ENCODE measurements at regions of chr2 and their contacts with region 1.

Region 1: GRCh38 chr2:160406591-160407392 is 86.8 kb downstream of the RBMS1 start:
- DNase-seq: peak; percentile 50 to 65
- ATAC-seq: peak; percentile 12 to 67 (median 52)
- H3K4me3 ChIP-seq: peak overlapping the region; percentile 79 to 97 (median 90)
- H3K27ac ChIP-seq: peak overlapping the region; percentile 88 to 100 (median 96)
- H3K4me1 ChIP-seq: peaks cover 4 to 82% (median 77%) of the 10 kb centered on the region in 9 donors
- H3K27me3 ChIP-seq: no peaks in the 10 kb centered on the region
- CTCF ChIP-seq: peak in 1 of 9 donors; percentile 5

Region 2: GRCh38 chr2:160324161-160324800 is 82.5 kb before region 1 on chr2:
- intact Hi-C with region 1: loop called in 3 of 10 experiments (anchors 5 kb)
- DNase-seq: peak; percentile 51 to 67
- ATAC-seq: peak in 7 of 8 donors; percentile 31 to 62 (median 40)
- H3K4me3 ChIP-seq: no peak overlapping the region
- H3K27ac ChIP-seq: peak overlapping the region in 3 of 10 donors; percentile 9 to 82 (median 36)
- H3K4me1 ChIP-seq: peaks cover 0 to 97% (median 77%) of the 10 kb centered on the region in 9 donors
- H3K27me3 ChIP-seq: no peaks in the 10 kb centered on the region
- CTCF ChIP-seq: peak; percentile 47 to 85 (median 73)

Region 3: GRCh38 chr2:160353166-160353565 is 53.6 kb before region 1 on chr2:
- intact Hi-C with region 1: loop called in 1 of 10 experiments (anchors 10 kb)
- DNase-seq: no peak
- ATAC-seq: no peak
- H3K4me3 ChIP-seq: no peak overlapping the region
- H3K27ac ChIP-seq: peak overlapping the region in 3 of 10 donors; percentile 8 to 45 (median 40)
- H3K4me1 ChIP-seq: peaks cover 2 to 86% (median 79%) of the 10 kb centered on the region in 9 donors
- H3K27me3 ChIP-seq: no peaks in the 10 kb centered on the region
- CTCF ChIP-seq: peak in 4 of 9 donors; percentile 22 to 45 (median 33)

Region 4: DNA sequence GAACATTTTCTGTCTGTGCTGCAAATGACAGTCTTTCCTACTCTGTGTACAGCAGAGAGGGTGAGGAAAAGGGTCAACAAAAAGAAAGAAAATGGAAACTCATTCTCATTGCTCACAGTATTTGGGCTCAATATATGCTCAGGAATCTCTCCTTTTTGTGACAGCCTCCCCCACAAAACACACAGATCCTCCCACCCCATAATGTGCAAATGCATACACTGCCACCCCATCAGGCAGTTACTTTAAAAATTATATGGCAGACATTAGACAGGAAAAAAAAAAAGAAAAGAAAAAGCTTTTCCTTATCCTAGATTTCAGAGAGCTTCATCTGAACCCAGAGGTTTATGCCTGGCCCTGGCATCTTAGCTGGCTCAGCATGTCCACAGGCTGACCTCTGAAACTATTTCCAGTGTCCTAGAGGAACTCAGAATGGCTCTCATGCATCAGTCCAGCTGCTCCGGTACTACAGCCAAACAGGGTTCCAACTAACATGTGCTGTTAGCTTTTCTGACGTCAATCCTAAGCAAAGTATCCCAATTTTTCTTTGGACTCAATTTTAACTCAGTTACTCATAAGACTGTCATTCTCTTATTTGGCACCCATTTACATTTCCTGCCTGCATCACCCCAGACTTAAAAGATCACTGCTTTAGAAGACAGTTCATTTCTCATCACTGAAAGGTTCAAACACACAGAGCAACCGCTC is 19.1 kb before region 1 on chr2:
- intact Hi-C with region 1: loop called in 1 of 10 experiments (anchors 1 kb)
- DNase-seq: peak; percentile 43 to 85
- ATAC-seq: peak; percentile 87 to 95 (median 94)
- H3K4me3 ChIP-seq: peak overlapping the region in 3 of 10 donors; percentile 0 to 18 (median 14)
- H3K27ac ChIP-seq: peak overlapping the region; percentile 73 to 94 (median 86)
- H3K4me1 ChIP-seq: peaks cover 13 to 100% (median 70%) of the 10 kb centered on the region in 9 donors
- H3K27me3 ChIP-seq: no peaks in the 10 kb centered on the region
- CTCF ChIP-seq: no peak

Region 5: GRCh38 chr2:160752496-160753330 is 345.9 kb after region 1 on chr2:
- intact Hi-C with region 1: no loop called
- DNase-seq: no peak
- ATAC-seq: no peak
- H3K4me3 ChIP-seq: no peak overlapping the region
- H3K27ac ChIP-seq: no peak overlapping the region
- H3K4me1 ChIP-seq: no peaks in the 10 kb centered on the region
- H3K27me3 ChIP-seq: no peaks in the 10 kb centered on the region
- CTCF ChIP-seq: no peak

Region 6: DNA sequence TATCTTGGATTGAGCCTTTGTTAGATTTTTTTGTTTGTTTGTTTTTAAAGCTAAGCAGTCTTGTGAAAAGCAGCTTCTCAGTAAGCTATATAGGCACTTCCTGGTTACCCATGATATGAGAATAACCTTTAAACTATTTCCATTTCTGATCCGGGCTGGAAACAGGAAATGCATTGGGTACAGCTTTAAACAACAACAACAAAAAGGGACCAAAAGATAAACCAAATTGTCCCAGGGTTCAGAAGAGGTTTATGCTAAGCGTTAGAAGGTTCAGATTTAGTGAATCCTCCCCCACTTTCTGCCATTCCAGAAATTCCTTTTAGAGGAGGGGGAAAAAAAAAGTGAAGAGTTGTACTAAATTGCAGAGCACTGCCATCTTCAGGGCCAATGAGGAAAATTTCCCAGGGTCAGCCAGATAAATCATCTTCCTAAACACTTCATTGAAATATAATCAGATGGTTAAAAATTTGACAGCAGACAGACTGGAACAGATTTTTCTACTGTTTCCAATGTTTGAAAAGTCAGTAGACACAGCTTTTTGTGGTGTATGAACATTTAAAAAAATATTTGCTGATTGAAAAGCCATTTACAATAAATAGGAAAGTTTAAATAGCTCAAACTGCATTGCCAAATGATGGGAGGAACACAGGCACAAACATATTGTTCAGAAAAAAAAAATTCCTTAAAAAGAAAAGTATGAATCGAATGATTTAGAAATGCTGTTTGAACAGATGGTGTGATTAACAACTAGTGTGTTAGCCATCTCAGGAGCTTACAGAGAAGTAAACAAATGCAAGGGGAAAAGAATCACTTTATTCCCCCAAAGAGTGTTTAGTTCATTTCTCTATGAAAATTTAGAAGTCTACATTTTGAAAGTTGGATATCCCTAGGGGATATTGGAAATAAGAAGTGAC is 563.5 kb after region 1 on chr2:
- intact Hi-C with region 1: loop called in 2 of 10 experiments (anchors 10 kb)
- DNase-seq: peak in 1 of 2 donors; percentile 57
- ATAC-seq: peak; percentile 32 to 81 (median 74)
- H3K4me3 ChIP-seq: peak overlapping the region in 7 of 10 donors; percentile 9 to 40 (median 32)
- H3K27ac ChIP-seq: peak overlapping the region in 9 of 10 donors; percentile 14 to 75 (median 68)
- H3K4me1 ChIP-seq: peaks cover 0 to 24% (median 13%) of the 10 kb centered on the region in 9 donors
- H3K27me3 ChIP-seq: no peaks in the 10 kb centered on the region
- CTCF ChIP-seq: peak; percentile 49 to 86 (median 80)

Measured in heart right ventricle (tissue), 16 donors.